ENCODE measurements at regions of chr17 and their contacts with region 1.

Region 1: DNA sequence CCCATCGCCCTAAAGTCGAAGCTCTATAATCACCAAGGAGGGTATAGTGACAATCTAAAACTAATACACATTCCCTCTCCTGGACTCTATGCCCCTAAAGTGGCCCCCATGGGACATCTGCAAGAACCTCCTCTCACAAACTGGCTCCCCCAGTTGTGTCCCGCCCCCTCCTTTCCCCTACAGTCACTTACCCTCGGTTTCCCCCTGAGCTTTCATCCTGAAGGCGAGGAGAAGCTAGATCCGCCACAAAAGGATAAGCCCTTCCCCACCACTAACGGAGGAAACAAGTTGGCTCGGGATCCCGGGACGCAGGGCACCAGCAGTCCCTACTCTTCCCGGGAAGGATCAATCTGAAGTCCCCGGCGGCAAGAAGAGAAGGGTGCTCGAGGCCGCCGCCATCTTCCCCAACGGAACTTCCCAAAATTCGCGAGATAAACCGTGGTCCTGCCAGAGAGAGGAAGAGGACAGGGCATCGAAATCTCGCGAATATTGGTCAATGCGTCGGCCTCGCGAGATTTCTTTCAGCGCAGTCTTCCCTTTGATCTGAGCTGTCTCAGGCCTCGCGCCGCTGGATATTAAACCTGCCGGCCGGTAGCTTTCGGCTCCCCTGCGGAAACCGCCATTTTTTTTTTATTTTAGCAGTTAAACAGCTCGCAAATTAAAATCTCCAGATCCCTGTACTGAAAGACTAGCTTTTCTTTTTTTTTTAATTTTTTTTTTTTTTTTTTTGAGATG is at the start of gene MED1:
- H3K4me3 ChIP-seq: peak within 1 kb of the TSS; percentile 84
- H3K27ac ChIP-seq: peak within 1 kb of the TSS; percentile 83
- H3K4me1 ChIP-seq: no peaks in the 10 kb centered on the region
- CTCF ChIP-seq: no peak

Region 2: GRCh38 chr17:39401412-39402243 is 49.4 kb before region 1 on chr17 and contains the start of gene FBXL20:
- CTCF ChIA-PET with region 1: interaction called, 3 read pairs
- POLR2A ChIA-PET with region 1: interaction called, 14 read pairs
- H3K4me3 ChIP-seq: peak within 1 kb of the TSS; percentile 99
- H3K27ac ChIP-seq: peak within 1 kb of the TSS; percentile 93
- H3K4me1 ChIP-seq: peaks cover 17% of the 10 kb centered on the region; the same call in 1 of the 2 replicates
- CTCF ChIP-seq: peak; percentile 37; the same call in 1 of the 2 replicates

Region 3: DNA sequence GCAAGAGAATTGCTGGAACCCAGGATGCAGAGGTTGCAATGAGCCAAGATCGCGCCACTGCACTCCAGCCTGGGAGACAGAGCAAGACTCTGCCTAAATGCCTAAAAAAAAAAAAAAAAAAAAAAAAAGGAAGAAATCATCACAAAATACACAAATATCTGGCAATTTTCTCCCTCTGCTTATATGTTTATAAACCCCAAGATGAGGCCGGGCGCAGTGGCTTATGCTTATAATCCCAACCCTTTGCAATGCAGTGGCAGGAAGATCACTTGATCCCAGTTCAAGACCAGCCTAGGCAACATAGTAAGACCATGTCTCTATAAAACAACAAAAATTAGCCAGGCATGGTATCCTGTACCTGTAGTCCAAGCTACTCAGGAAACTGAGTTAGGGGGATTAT is 21.4 kb before region 1 on chr17:
- CTCF ChIA-PET with region 1: no interaction called
- POLR2A ChIA-PET with region 1: no interaction called
- H3K4me3 ChIP-seq: no peak overlapping the region
- H3K27ac ChIP-seq: no peak overlapping the region
- H3K4me1 ChIP-seq: no peaks in the 10 kb centered on the region
- CTCF ChIP-seq: no peak

Measured in HEK293 (cell line).